ENCODE measurements at regions of chr2 and their contacts with region 1.

Region 1: GRCh38 chr2:203683932-203684556 is 22.4 kb upstream of the CD28 start:
- DNase-seq: no peak
- ATAC-seq: no peak

Region 2: DNA sequence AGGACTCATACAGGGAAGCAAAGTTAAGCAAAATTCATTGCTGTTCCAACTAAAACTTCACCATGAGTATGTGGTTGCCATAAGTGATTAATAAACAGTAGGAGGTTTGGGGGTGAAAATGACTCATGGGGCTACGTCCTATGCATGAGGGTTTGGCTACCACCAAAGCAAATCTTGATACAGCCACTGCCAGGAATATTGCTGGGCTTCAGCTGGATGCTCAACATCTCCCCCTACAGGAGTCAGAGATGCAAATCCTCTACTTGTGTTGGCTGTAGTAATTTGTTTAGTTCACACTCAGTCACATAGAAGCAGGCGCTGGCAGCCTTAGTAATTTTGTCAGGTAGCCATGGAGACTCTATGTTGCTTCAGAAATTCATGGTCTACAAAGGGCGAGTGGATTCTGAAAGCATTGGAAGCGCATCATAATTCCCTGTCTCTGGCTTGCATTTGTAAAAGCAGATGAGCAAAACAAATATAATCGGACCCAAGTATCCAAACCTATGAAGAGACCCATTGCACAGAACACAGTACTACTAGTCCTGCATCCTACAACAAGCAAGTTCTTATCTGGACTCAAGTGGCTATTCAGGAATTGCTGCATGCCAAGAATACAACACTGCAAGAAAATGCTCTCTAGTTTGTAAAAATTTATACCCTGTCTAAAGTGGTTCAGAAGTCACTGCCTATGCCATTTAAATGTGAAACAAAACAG is 98.4 kb after region 1 on chr2:
- intact Hi-C with region 1: loop called (anchors 5 kb)
- DNase-seq: no peak
- ATAC-seq: peak; percentile 54

Measured in Right ventricle myocardium inferior (tissue), 1 donor.